Sciatic nerve (tissue), 2 donors: ENCODE measurements at regions of chr2 and their contacts with region 1.

Region 1: GRCh38 chr2:210252699-210253606 is 27.7 kb upstream of the ACADL start:
- DNase-seq: no peak
- ATAC-seq: no peak

Region 2: DNA sequence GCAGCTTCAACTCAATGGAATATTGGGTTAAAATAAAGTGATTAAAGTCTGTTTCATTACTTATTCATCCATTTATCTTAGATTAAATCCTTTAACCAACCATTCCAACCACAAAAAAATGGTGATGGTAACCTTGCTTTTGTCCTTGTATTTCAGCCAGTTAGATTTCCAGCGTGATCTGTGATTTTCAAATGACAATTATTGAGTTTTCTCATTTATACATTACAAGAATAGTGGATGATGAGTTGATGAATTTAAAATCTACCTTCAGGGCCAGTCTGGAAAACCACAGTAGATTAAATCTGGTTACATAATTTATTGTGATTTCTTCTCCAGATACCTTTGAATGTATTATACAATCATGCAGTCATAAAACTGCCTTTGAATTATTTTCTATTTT is 511.0 kb before region 1 on chr2:
- intact Hi-C with region 1: no loop called
- DNase-seq: no peak
- ATAC-seq: no peak

Region 3: GRCh38 chr2:209977386-209978239 is 275.3 kb before region 1 on chr2:
- intact Hi-C with region 1: no loop called
- DNase-seq: no peak
- ATAC-seq: peak; percentile 42

Region 4: GRCh38 chr2:210399440-210400041 is 146.6 kb after region 1 on chr2:
- intact Hi-C with region 1: loop called (anchors 10 kb)
- DNase-seq: no peak
- ATAC-seq: peak; percentile 20